T-cell (primary cell): ENCODE measurements at regions of chr10 and their contacts with region 1.

Region 1: GRCh38 chr10:35470260-35470918 is 134.1 kb downstream of the CCNY start:
- DNase-seq: no peak
- ATAC-seq: no peak
- H3K4me3 ChIP-seq: no peak overlapping the region
- H3K4me3 Mint-ChIP-seq: peak overlapping the region in 1 of 3 donors; percentile 64
- H3K27ac ChIP-seq: no peak overlapping the region
- H3K27ac Mint-ChIP-seq: no peak overlapping the region
- H3K4me1 ChIP-seq: peaks cover 0 to 18% of the 10 kb centered on the region in 2 experiments
- H3K4me1 Mint-ChIP-seq: peaks cover 49 to 53% (median 52%) of the 10 kb centered on the region in 3 donors
- H3K27me3 ChIP-seq: no peaks in the 10 kb centered on the region
- H3K27me3 Mint-ChIP-seq: no peaks in the 10 kb centered on the region

Region 2: GRCh38 chr10:35372329-35372728 is 98.1 kb before region 1 on chr10:
- CTCF ChIA-PET with region 1: no interaction called
- POLR2A ChIA-PET with region 1: no interaction called
- DNase-seq: no peak
- ATAC-seq: no peak
- H3K4me3 ChIP-seq: peak overlapping the region in 1 of 2 donors; percentile 6
- H3K4me3 Mint-ChIP-seq: peak overlapping the region in 1 of 3 donors; percentile 56
- H3K27ac ChIP-seq: no peak overlapping the region
- H3K27ac Mint-ChIP-seq: no peak overlapping the region
- H3K4me1 ChIP-seq: peaks cover 20 to 33% of the 10 kb centered on the region in 2 experiments
- H3K4me1 Mint-ChIP-seq: peaks cover 88 to 95% (median 90%) of the 10 kb centered on the region in 3 donors
- H3K27me3 ChIP-seq: no peaks in the 10 kb centered on the region
- H3K27me3 Mint-ChIP-seq: no peaks in the 10 kb centered on the region

Region 3: GRCh38 chr10:35420044-35420443 is 50.3 kb before region 1 on chr10:
- CTCF ChIA-PET with region 1: no interaction called
- POLR2A ChIA-PET with region 1: interaction called in 1 of 2 experiments, 19 read pairs
- DNase-seq: no peak
- ATAC-seq: no peak
- H3K4me3 ChIP-seq: no peak overlapping the region
- H3K4me3 Mint-ChIP-seq: no peak overlapping the region
- H3K27ac ChIP-seq: no peak overlapping the region
- H3K27ac Mint-ChIP-seq: peak overlapping the region in 1 of 2 donors; percentile 63
- H3K4me1 ChIP-seq: peaks cover 6 to 12% of the 10 kb centered on the region in 2 experiments
- H3K4me1 Mint-ChIP-seq: peaks cover 46 to 57% (median 50%) of the 10 kb centered on the region in 3 donors
- H3K27me3 ChIP-seq: no peaks in the 10 kb centered on the region
- H3K27me3 Mint-ChIP-seq: no peaks in the 10 kb centered on the region

Region 4: GRCh38 chr10:35668865-35669650 is 198.7 kb after region 1 on chr10:
- CTCF ChIA-PET with region 1: no interaction called
- POLR2A ChIA-PET with region 1: no interaction called
- DNase-seq: no peak
- ATAC-seq: no peak
- H3K4me3 ChIP-seq: no peak overlapping the region
- H3K4me3 Mint-ChIP-seq: no peak overlapping the region
- H3K27ac ChIP-seq: no peak overlapping the region
- H3K27ac Mint-ChIP-seq: no peak overlapping the region
- H3K4me1 ChIP-seq: no peaks in the 10 kb centered on the region
- H3K4me1 Mint-ChIP-seq: no peaks in the 10 kb centered on the region
- H3K27me3 ChIP-seq: peaks cover 0 to 8% of the 10 kb centered on the region in 2 experiments
- H3K27me3 Mint-ChIP-seq: peaks cover 3 to 14% of the 10 kb centered on the region in 2 donors